Cardiac septum (tissue), 1 donor: ENCODE measurements at regions of chr4 and their contacts with region 1.

Region 1: GRCh38 chr4:24488399-24489164 is 95.8 kb downstream of the DHX15 start:
- DNase-seq: no peak

Region 2: GRCh38 chr4:24686871-24687680 is 198.5 kb after region 1 on chr4:
- intact Hi-C with region 1: loop called (anchors 5 kb)
- DNase-seq: no peak

Region 3: DNA sequence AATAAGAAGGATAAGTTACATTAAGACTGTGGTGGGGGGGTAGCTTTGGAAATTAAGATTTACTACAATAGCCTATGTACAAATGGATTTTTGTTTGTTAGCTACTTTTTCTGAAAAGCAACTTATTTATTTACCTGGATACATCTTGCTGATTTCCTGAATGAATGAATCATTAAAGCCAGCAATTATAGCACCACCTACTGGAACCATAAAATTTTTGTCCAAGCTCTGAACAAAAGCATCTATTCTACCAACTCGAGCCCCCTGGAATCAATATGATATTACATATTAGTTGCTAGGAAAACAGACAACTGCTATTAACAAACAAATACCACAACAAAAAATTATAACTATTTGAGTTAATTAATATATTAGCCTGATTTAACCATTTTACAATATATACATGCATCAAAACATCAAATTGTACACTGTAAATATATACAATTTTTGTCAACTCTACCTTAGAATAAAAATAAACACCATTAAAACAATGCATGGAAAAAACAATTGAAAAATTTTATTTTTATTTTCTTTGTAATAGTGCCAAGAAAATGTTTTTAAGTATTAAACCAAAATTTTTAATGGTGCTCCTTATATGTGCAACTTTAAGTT is 656.4 kb after region 1 on chr4:
- intact Hi-C with region 1: loop called (anchors 5 kb)
- DNase-seq: no peak